ENCODE measurements at regions of chr18 and their contacts with region 1.

Region 1: DNA sequence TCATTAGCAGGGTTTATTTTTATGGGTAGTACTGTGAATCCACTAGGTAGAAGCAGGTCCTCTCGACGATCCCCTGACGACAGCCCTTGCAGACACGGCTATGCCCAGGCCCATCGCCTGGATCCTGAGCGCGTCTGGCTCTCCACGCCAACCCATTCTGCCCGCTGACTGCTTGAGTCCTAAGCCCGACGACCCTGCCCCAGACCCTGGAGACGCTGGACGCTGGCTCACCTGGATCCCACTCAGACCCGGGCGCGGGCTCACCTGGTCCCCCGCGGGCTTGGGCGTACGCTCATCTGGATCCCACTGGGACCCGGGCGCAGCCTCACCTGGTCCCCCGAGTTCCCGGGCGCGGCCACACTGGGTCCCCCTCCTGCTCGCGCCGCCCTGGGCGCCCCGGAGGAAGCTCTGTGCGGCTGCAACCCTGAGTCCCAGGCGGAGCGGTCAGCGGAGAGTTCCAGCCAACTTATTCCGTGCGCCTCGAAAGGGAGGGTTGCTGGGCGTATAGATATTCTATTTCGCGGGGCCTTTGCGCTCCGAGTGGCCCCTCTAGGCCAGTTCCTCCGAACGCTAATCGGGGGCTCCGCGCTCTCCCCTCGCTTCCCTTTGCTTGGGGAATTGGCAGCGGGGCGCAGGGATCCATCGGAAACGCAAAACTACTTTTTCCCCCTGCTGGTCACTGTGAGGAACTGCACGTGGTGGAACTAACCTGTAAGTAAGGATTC is 22.4 kb upstream of the RMP24 start:
- DNase-seq: peak; percentile 48
- H3K4me3 ChIP-seq: peak overlapping the region; percentile 72
- H3K27ac ChIP-seq: no peak overlapping the region
- H3K4me1 ChIP-seq: peaks cover 9% of the 10 kb centered on the region
- H3K27me3 ChIP-seq: peaks cover 3% of the 10 kb centered on the region
- CTCF ChIP-seq: peak; percentile 96

Region 2: GRCh38 chr18:35386600-35387351 is 563.3 kb before region 1 on chr18:
- intact Hi-C with region 1: loop called (anchors 10 kb)
- DNase-seq: peak; percentile 32
- H3K4me3 ChIP-seq: no peak overlapping the region
- H3K27ac ChIP-seq: no peak overlapping the region
- H3K4me1 ChIP-seq: no peaks in the 10 kb centered on the region
- H3K27me3 ChIP-seq: peaks cover 34% of the 10 kb centered on the region
- CTCF ChIP-seq: peak; percentile 93

Region 3: GRCh38 chr18:35672897-35673296 is 277.2 kb before region 1 on chr18:
- intact Hi-C with region 1: no loop called
- DNase-seq: no peak
- H3K4me3 ChIP-seq: no peak overlapping the region
- H3K27ac ChIP-seq: no peak overlapping the region
- H3K4me1 ChIP-seq: no peaks in the 10 kb centered on the region
- H3K27me3 ChIP-seq: no peaks in the 10 kb centered on the region
- CTCF ChIP-seq: no peak

Region 4: DNA sequence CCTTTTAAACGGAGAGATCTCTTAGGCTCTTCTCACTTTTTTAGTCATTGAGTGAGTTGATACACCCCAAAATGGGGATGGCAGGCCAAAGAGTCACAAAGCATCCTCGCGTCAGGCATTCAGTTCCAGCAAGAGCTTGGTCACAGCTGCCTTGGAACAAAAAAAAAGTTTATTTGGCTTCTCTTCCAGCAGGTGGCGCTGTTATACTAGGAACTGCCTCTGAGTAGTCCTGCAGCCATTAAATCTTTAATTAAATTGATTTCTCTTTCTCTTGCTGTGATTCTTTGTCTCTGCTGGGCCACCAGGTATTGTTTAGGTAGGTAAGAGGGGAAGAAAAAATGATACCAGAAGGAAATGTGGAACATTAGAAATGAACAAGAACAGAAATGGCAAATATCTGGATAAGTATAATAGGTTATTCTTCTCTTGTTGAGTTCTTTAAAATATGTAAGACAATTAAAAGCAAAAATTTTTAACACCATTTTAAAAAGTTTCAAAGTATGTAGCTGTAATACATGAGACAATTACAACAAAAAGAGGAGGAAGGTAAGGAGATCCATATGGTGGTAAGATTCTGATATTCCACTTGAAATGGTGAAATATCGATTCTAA is 193.5 kb before region 1 on chr18:
- intact Hi-C with region 1: loop called (anchors 5 kb)
- DNase-seq: no peak
- H3K4me3 ChIP-seq: no peak overlapping the region
- H3K27ac ChIP-seq: no peak overlapping the region
- H3K4me1 ChIP-seq: no peaks in the 10 kb centered on the region
- H3K27me3 ChIP-seq: no peaks in the 10 kb centered on the region
- CTCF ChIP-seq: peak; percentile 81

Region 5: DNA sequence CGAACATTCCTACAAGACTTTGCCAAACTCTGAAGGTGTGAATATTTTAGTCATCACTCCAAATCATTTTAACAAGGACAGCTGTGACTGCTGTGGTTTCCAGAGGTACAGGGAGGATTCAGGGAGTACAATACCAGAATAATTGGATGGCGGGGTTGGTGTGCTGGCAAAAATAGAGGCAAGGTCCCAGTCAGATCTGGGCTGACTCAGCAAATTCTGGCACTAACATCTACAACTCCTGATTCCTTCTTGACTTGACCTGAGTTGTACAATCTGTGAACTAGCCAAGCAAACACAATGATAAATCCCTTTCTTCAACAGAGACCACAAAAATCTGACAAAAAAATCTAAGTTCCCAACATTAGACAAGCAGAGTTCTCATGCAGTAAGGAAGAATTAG is 62.8 kb after region 1 on chr18:
- intact Hi-C with region 1: no loop called
- DNase-seq: no peak
- H3K4me3 ChIP-seq: no peak overlapping the region
- H3K27ac ChIP-seq: no peak overlapping the region
- H3K4me1 ChIP-seq: peaks cover 6% of the 10 kb centered on the region
- H3K27me3 ChIP-seq: no peaks in the 10 kb centered on the region
- CTCF ChIP-seq: no peak

Measured in left ventricle myocardium inferior (tissue), 1 donor.